Activated CD4-positive, alpha-beta T cell treated with anti-CD3 and anti-CD28 coated beads for 36 hours (primary cell): ENCODE measurements at regions of chr1 and their contacts with region 1.

Region 1: DNA sequence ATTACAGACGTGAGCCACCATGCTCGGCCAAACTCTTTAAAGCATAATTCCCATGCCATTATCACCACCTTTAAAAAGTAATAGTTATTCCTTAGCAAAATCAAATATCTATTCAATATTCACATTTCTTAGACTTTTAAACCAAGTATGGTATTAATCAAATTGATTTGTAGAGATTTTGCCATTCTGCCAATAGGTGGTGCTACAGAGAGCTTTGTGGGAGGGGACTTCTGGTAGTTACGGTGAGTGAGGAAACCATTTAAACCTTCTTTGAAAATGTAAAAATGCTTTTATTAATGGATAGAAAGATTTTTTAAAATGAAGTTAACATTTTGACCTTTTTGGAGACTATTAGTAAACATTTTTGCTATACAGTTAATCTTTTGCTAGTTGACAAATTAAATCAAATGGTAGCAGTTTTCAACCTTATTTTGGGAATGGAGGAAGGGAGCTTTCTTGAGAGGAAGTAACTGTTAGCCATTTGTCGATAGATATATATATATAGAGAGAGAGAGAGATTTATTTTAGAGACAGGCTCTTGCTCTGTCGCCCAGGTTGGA is 19.3 kb downstream of the IARS2 start:
- DNase-seq: peak; percentile 40
- ATAC-seq: peak; percentile 69
- H3K4me3 Mint-ChIP-seq: no peak overlapping the region
- H3K27ac Mint-ChIP-seq: no peak overlapping the region
- H3K4me1 Mint-ChIP-seq: peaks cover 6% of the 10 kb centered on the region
- H3K27me3 Mint-ChIP-seq: no peaks in the 10 kb centered on the region

Region 2: GRCh38 chr1:220099826-220100225 is 13.4 kb before region 1 on chr1:
- CTCF ChIA-PET with region 1: interaction called, 13 read pairs
- POLR2A ChIA-PET with region 1: no interaction called
- intact Hi-C with region 1: no loop called
- DNase-seq: no peak
- ATAC-seq: no peak
- H3K4me3 Mint-ChIP-seq: no peak overlapping the region
- H3K27ac Mint-ChIP-seq: peak overlapping the region; percentile 47
- H3K4me1 Mint-ChIP-seq: peaks cover 16% of the 10 kb centered on the region
- H3K27me3 Mint-ChIP-seq: no peaks in the 10 kb centered on the region

Region 3: DNA sequence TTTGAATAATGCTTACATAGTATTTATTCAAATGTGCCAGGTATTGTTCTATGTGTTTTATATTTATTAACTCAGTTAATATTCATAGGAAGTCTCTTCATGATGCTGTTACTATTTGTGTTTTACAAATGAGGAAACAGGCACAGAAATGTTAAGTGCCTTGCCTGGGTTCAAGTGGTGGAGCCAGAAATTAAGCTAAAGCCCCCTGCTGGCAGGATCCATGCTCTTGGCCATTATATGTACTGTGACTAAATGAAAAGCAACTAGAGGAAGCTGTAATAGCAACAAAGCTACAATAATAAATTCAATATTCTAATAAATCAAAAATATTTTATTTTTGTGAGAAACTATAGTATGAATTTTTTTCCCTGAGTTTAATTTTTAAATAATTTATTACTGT is 10.7 kb after region 1 on chr1:
- CTCF ChIA-PET with region 1: interaction called, 18 read pairs
- POLR2A ChIA-PET with region 1: no interaction called
- intact Hi-C with region 1: no loop called
- DNase-seq: peak; percentile 35
- ATAC-seq: no peak
- H3K4me3 Mint-ChIP-seq: no peak overlapping the region
- H3K27ac Mint-ChIP-seq: no peak overlapping the region
- H3K4me1 Mint-ChIP-seq: peaks cover 11% of the 10 kb centered on the region
- H3K27me3 Mint-ChIP-seq: no peaks in the 10 kb centered on the region

Region 4: GRCh38 chr1:220604934-220605333 is 491.7 kb after region 1 on chr1:
- CTCF ChIA-PET with region 1: no interaction called
- POLR2A ChIA-PET with region 1: no interaction called
- intact Hi-C with region 1: no loop called
- DNase-seq: no peak
- ATAC-seq: no peak
- H3K4me3 Mint-ChIP-seq: no peak overlapping the region
- H3K27ac Mint-ChIP-seq: no peak overlapping the region
- H3K4me1 Mint-ChIP-seq: no peaks in the 10 kb centered on the region
- H3K27me3 Mint-ChIP-seq: peaks cover 2% of the 10 kb centered on the region